Activated CD4-positive, alpha-beta T cell treated with anti-CD3 and anti-CD28 coated beads for 36 hours (primary cell): ENCODE measurements at regions of chr12 and their contacts with region 1.

Region 1: DNA sequence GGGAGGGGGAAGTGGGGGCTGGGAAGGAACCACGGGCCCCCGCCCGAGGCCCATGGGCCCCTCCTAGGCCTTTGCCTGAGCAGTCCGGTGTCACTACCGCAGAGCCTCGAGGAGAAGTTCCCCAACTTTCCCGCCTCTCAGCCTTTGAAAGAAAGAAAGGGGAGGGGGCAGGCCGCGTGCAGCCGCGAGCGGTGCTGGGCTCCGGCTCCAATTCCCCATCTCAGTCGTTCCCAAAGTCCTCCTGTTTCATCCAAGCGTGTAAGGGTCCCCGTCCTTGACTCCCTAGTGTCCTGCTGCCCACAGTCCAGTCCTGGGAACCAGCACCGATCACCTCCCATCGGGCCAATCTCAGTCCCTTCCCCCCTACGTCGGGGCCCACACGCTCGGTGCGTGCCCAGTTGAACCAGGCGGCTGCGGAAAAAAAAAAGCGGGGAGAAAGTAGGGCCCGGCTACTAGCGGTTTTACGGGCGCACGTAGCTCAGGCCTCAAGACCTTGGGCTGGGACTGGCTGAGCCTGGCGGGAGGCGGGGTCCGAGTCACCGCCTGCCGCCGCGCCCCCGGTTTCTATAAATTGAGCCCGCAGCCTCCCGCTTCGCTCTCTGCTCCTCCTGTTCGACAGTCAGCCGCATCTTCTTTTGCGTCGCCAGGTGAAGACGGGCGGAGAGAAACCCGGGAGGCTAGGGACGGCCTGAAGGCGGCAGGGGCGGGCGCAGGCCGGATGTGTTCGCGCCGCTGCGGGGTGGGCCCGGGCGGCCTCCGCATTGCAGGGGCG is at the start of gene GAPDH:
- DNase-seq: peak; percentile 95
- ATAC-seq: peak; percentile 53
- H3K4me3 Mint-ChIP-seq: peak within 1 kb of the TSS; percentile 98
- H3K27ac Mint-ChIP-seq: peak within 1 kb of the TSS; percentile 100
- H3K4me1 Mint-ChIP-seq: peaks cover 37% of the 10 kb centered on the region
- H3K27me3 Mint-ChIP-seq: no peaks in the 10 kb centered on the region
- total RNA-seq, gene GAPDH: 7,289 to 9,770 TPM

Region 2: GRCh38 chr12:5535541-5535940 is 998.6 kb before region 1 on chr12:
- CTCF ChIA-PET with region 1: no interaction called
- POLR2A ChIA-PET with region 1: no interaction called
- intact Hi-C with region 1: no loop called
- DNase-seq: no peak
- ATAC-seq: no peak
- H3K4me3 Mint-ChIP-seq: no peak overlapping the region
- H3K27ac Mint-ChIP-seq: no peak overlapping the region
- H3K4me1 Mint-ChIP-seq: no peaks in the 10 kb centered on the region
- H3K27me3 Mint-ChIP-seq: peaks cover 14% of the 10 kb centered on the region

Region 3: DNA sequence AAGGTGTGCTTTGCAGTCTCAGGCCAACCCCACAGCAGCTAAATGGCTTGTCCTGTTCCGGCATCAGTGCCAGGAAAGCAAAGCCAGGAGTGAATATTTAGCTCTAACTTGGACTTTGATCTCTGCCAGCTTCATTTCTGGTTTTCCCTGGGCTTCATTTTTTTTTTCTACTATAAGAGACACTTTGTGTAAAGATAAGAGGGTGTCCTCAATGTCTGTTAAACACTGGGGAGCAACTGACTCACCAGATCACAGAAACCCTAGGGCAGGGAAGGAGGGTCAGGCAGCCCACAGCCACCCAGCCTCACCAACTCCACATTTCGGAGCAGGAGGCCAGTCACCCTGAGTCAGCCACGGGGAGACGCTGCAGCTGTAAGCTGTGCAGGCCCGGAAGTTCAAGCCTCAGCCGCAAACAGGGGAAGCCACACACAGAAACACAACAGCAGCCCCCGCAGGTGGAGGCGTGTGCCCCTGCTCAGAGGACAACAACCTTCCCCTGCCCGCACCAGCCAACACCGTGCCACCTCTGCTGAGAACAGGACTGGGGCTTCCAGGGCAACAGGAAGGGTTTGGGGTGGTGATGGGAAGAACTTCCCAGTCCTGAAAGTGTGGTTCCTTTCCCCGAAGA is 198.5 kb before region 1 on chr12:
- CTCF ChIA-PET with region 1: interaction called, 3 read pairs
- POLR2A ChIA-PET with region 1: interaction called, 3 read pairs
- intact Hi-C with region 1: loop called (anchors 1 to 5 kb)
- DNase-seq: peak; percentile 94
- ATAC-seq: peak; percentile 83
- H3K4me3 Mint-ChIP-seq: no peak overlapping the region
- H3K27ac Mint-ChIP-seq: no peak overlapping the region
- H3K4me1 Mint-ChIP-seq: peaks cover 21% of the 10 kb centered on the region
- H3K27me3 Mint-ChIP-seq: no peaks in the 10 kb centered on the region

Region 4: GRCh38 chr12:6430124-6430989 is 103.8 kb before region 1 on chr12:
- CTCF ChIA-PET with region 1: interaction called, 53 read pairs
- POLR2A ChIA-PET with region 1: interaction called, 7 read pairs
- intact Hi-C with region 1: loop called (anchors 1 kb)
- DNase-seq: peak; percentile 84
- ATAC-seq: no peak
- H3K4me3 Mint-ChIP-seq: peak overlapping the region; percentile 1
- H3K27ac Mint-ChIP-seq: peak overlapping the region; percentile 80
- H3K4me1 Mint-ChIP-seq: peaks cover 80% of the 10 kb centered on the region
- H3K27me3 Mint-ChIP-seq: no peaks in the 10 kb centered on the region

Region 5: DNA sequence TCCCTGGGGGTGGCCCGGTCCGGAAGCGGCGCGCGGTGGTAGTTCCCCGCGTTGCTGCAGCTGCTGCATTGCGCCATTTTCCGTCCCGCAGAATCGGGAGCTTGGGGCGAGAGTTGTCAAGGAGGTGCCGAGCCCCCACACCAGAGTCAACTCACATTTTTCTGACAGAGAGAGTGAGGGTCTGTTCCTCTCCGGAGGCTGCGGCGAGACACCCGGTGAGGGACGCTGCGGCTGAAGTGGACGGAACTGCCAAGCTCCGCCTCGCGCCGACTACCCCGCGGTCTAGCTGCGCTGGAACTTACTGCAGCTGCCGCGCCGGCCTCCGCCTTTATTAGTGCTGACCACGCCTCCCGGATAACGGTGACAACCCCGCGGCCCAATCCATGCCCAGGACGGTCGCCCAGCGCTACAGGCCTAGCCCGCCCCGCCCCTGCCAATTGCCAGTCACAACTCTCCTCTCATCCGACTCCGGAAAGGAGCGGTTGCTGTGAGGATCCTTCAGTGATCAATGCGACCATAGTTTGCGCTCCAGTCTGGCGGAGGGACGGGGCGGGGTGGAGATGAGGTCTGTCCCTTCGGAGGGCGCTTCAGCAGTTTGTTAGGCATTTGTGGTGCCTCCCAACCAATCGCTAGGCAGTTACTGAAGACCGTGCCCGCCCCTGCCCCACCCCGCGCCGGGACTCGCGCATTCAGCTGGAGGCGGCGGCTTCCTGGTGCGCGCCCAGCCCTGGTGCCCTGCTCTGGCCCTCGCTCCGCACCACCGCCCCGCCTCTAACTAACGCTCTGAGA is 63.5 kb before region 1 on chr12 and contains the start of gene VAMP1:
- CTCF ChIA-PET with region 1: interaction called, 15 read pairs
- POLR2A ChIA-PET with region 1: interaction called, 45 read pairs
- intact Hi-C with region 1: loop called (anchors 1 kb)
- DNase-seq: peak; percentile 99
- ATAC-seq: peak; percentile 91
- H3K4me3 Mint-ChIP-seq: peak within 1 kb of the TSS; percentile 91
- H3K27ac Mint-ChIP-seq: peak within 1 kb of the TSS; percentile 82
- H3K4me1 Mint-ChIP-seq: peaks cover 52% of the 10 kb centered on the region
- H3K27me3 Mint-ChIP-seq: no peaks in the 10 kb centered on the region
- total RNA-seq, gene VAMP1: 34.5 to 52.3 TPM

Region 6: GRCh38 chr12:6554168-6555017 is 20.3 kb after region 1 on chr12:
- CTCF ChIA-PET with region 1: interaction called, 141 read pairs
- POLR2A ChIA-PET with region 1: interaction called, 13 read pairs
- intact Hi-C with region 1: loop called in 1 of 2 experiments (anchors 1 kb)
- DNase-seq: peak; percentile 88
- ATAC-seq: peak; percentile 68
- H3K4me3 Mint-ChIP-seq: peak overlapping the region; percentile 91
- H3K27ac Mint-ChIP-seq: peak overlapping the region; percentile 76
- H3K4me1 Mint-ChIP-seq: peaks cover 54% of the 10 kb centered on the region
- H3K27me3 Mint-ChIP-seq: no peaks in the 10 kb centered on the region

Region 7: GRCh38 chr12:6896846-6897435 is 362.8 kb after region 1 on chr12:
- CTCF ChIA-PET with region 1: no interaction called
- POLR2A ChIA-PET with region 1: no interaction called
- intact Hi-C with region 1: no loop called
- DNase-seq: no peak
- ATAC-seq: no peak
- H3K4me3 Mint-ChIP-seq: no peak overlapping the region
- H3K27ac Mint-ChIP-seq: no peak overlapping the region
- H3K4me1 Mint-ChIP-seq: peaks cover 19% of the 10 kb centered on the region
- H3K27me3 Mint-ChIP-seq: no peaks in the 10 kb centered on the region

Region 8: GRCh38 chr12:6953442-6954315 is 419.6 kb after region 1 on chr12:
- CTCF ChIA-PET with region 1: no interaction called
- POLR2A ChIA-PET with region 1: interaction called, 4 read pairs
- intact Hi-C with region 1: loop called in 1 of 2 experiments (anchors 5 kb)
- DNase-seq: peak; percentile 87
- ATAC-seq: peak; percentile 33
- H3K4me3 Mint-ChIP-seq: peak overlapping the region; percentile 95
- H3K27ac Mint-ChIP-seq: peak overlapping the region; percentile 97
- H3K4me1 Mint-ChIP-seq: peaks cover 70% of the 10 kb centered on the region
- H3K27me3 Mint-ChIP-seq: no peaks in the 10 kb centered on the region